B cell (primary cell): ENCODE measurements at regions of chr1 and their contacts with region 1.

Region 1: GRCh38 chr1:44594871-44595746 is 79.2 kb downstream of the TMEM53 start:
- DNase-seq: peak; percentile 80
- ATAC-seq: peak; percentile 91
- H3K4me3 ChIP-seq: no peak overlapping the region
- H3K4me3 Mint-ChIP-seq: no peak overlapping the region
- H3K27ac ChIP-seq: no peak overlapping the region
- H3K27ac Mint-ChIP-seq: peak overlapping the region; percentile 16
- H3K4me1 ChIP-seq: peaks cover 0 to 3% of the 10 kb centered on the region in 2 donors
- H3K4me1 Mint-ChIP-seq: no peaks in the 10 kb centered on the region
- H3K27me3 ChIP-seq: no peaks in the 10 kb centered on the region
- H3K27me3 Mint-ChIP-seq: peaks cover 7% of the 10 kb centered on the region
- CTCF ChIP-seq: peak; percentile 99

Region 2: DNA sequence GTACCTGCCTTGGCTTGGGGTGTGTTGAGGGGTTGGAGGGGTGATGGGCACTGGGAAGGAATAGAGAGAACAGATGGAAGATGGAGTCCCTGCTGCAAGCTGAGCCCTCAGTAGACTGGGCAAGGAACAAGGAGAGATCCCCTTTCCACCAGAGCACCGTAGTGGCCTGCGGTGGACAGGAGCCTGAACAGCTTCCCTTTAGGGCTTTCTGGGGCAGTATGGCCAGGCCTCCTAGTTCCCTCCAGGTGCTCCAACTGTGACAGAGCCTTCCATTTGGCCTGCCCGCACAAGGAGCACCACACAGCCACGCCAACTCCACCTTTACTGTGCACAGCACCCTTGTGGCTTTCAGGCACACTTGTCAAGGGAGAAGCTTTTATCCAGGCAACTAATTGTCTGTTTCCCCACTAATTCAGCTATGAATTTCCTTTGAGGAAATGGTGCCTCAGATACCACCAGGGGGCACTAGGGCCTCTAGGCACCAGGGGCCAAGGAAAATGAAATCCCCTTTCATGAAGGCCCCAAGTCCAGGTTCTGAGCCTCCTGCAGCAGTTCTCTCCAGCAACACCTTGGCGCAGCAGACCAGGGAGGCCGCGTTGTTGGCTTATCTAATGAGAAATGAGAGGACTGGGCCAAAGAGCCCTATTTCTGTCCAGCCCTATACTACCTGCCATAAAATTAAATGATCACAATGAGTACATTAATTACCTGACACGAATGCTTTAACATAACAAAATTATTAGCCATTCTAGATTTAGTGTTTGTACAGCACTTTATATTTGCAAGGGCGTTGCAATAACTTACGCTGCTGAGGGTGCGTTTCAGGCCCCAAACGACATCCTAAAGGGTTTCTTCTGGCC is 217.0 kb before region 1 on chr1:
- CTCF ChIA-PET with region 1: interaction called, 126 read pairs
- POLR2A ChIA-PET with region 1: no interaction called
- intact Hi-C with region 1: no loop called
- DNase-seq: peak; percentile 66
- ATAC-seq: no peak
- H3K4me3 ChIP-seq: no peak overlapping the region
- H3K4me3 Mint-ChIP-seq: no peak overlapping the region
- H3K27ac ChIP-seq: no peak overlapping the region
- H3K27ac Mint-ChIP-seq: no peak overlapping the region
- H3K4me1 ChIP-seq: no peaks in the 10 kb centered on the region
- H3K4me1 Mint-ChIP-seq: no peaks in the 10 kb centered on the region
- H3K27me3 ChIP-seq: no peaks in the 10 kb centered on the region
- H3K27me3 Mint-ChIP-seq: peaks cover 6% of the 10 kb centered on the region
- CTCF ChIP-seq: peak; percentile 71

Region 3: DNA sequence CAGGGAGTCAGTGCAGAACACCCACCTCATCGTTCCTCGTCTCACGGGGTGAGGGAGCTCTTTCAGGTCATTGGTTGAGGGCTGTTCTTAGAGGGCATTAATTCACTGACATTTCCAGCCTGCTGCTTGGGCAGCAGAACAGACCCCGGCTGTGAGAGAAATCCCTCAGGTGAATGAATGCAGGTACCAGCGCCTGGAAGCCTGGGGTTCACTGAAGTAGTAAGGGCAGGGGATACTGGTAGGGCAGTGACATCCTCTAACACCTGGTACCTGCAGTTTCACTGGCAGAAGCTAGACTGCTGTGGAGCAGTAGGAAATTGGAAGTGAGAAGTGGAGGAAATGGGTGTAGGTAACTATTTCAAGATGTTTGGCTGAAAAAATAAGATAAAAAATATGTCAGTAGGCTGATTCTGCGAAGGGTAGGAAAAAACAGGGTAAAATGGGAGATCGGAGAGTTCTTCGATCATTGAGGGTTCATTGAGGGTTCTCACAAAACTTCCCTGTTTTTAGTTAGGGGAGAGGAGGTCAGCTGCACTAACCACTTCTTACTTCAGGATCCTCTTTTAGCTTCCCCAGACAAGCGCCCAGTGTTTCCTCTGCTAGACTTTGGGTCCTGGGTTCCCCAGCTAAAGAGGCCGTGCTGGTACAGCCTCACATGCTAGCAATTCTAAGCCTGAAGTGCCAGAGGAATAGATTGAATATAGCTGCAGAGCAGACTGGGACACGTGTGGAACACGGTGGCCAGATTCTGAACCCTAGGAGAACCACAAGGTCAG is 134.8 kb before region 1 on chr1:
- CTCF ChIA-PET with region 1: no interaction called
- POLR2A ChIA-PET with region 1: no interaction called
- intact Hi-C with region 1: no loop called
- DNase-seq: no peak
- ATAC-seq: no peak
- H3K4me3 ChIP-seq: no peak overlapping the region
- H3K4me3 Mint-ChIP-seq: no peak overlapping the region
- H3K27ac ChIP-seq: no peak overlapping the region
- H3K27ac Mint-ChIP-seq: no peak overlapping the region
- H3K4me1 ChIP-seq: peaks cover 0 to 2% of the 10 kb centered on the region in 2 donors
- H3K4me1 Mint-ChIP-seq: peaks cover 2% of the 10 kb centered on the region
- H3K27me3 ChIP-seq: peaks cover 0 to 8% (median 3%) of the 10 kb centered on the region in 4 experiments
- H3K27me3 Mint-ChIP-seq: peaks cover 42% of the 10 kb centered on the region
- CTCF ChIP-seq: no peak

Region 4: GRCh38 chr1:44571712-44572571 is 23.2 kb before region 1 on chr1:
- CTCF ChIA-PET with region 1: interaction called, 25 read pairs
- POLR2A ChIA-PET with region 1: no interaction called
- intact Hi-C with region 1: no loop called
- DNase-seq: peak; percentile 46
- ATAC-seq: no peak
- H3K4me3 ChIP-seq: no peak overlapping the region
- H3K4me3 Mint-ChIP-seq: no peak overlapping the region
- H3K27ac ChIP-seq: no peak overlapping the region
- H3K27ac Mint-ChIP-seq: no peak overlapping the region
- H3K4me1 ChIP-seq: no peaks in the 10 kb centered on the region
- H3K4me1 Mint-ChIP-seq: no peaks in the 10 kb centered on the region
- H3K27me3 ChIP-seq: peaks cover 0 to 4% (median 0%) of the 10 kb centered on the region in 4 experiments
- H3K27me3 Mint-ChIP-seq: peaks cover 36% of the 10 kb centered on the region
- CTCF ChIP-seq: peak; percentile 65

Region 5: GRCh38 chr1:44584167-44584566 is 10.9 kb before region 1 on chr1:
- CTCF ChIA-PET with region 1: interaction called, 21 read pairs
- POLR2A ChIA-PET with region 1: no interaction called
- intact Hi-C with region 1: no loop called
- DNase-seq: no peak
- ATAC-seq: no peak
- H3K4me3 ChIP-seq: no peak overlapping the region
- H3K4me3 Mint-ChIP-seq: no peak overlapping the region
- H3K27ac ChIP-seq: no peak overlapping the region
- H3K27ac Mint-ChIP-seq: no peak overlapping the region
- H3K4me1 ChIP-seq: no peaks in the 10 kb centered on the region
- H3K4me1 Mint-ChIP-seq: no peaks in the 10 kb centered on the region
- H3K27me3 ChIP-seq: no peaks in the 10 kb centered on the region
- H3K27me3 Mint-ChIP-seq: peaks cover 14% of the 10 kb centered on the region
- CTCF ChIP-seq: no peak